ENCODE measurements at regions of chr20 and their contacts with region 1.

Region 1: DNA sequence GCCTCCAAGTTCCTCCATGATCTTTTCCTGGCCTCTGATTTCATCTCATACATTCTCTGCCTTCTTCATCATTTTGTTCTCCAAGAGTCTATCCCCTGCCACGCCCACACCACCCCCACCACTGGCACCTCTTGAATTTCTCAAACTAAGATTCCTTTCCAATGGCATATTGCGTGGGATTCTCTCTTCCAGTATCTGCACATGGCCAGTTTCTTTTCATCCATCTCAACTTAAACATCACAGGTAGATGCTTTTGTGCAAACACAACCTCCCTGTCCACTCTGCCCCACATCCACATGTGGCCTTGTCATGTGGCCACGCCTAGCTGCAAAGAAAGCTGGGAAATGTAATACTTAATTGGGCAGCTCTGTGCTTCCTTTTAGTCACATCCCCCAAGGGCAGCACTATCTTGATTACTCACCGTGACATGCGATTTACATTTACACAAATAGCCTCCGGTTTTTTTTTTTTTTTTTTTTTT is 33.4 kb upstream of the ZMYND8 start:
- DNase-seq: no peak
- H3K4me3 ChIP-seq: no peak overlapping the region
- H3K27ac ChIP-seq: no peak overlapping the region
- H3K4me1 ChIP-seq: no peaks in the 10 kb centered on the region
- H3K27me3 ChIP-seq: no peaks in the 10 kb centered on the region
- CTCF ChIP-seq: no peak
- EP300 ChIP-seq: no peak
- POLR2A ChIP-seq: no peak

Region 2: GRCh38 chr20:47088335-47088734 is 301.6 kb before region 1 on chr20:
- intact Hi-C with region 1: no loop called
- DNase-seq: no peak
- H3K4me3 ChIP-seq: no peak overlapping the region
- H3K27ac ChIP-seq: no peak overlapping the region
- H3K4me1 ChIP-seq: no peaks in the 10 kb centered on the region
- H3K27me3 ChIP-seq: no peaks in the 10 kb centered on the region
- CTCF ChIP-seq: no peak
- EP300 ChIP-seq: no peak
- POLR2A ChIP-seq: no peak

Region 3: GRCh38 chr20:47493175-47493962 is 103.5 kb after region 1 on chr20:
- intact Hi-C with region 1: loop called in 1 of 4 experiments (anchors 10 kb)
- DNase-seq: peak; percentile 93 to 96 (median 95)
- H3K4me3 ChIP-seq: peak overlapping the region; percentile 9
- H3K27ac ChIP-seq: peak overlapping the region in 1 of 2 donors; percentile 36
- H3K4me1 ChIP-seq: peaks cover 5% of the 10 kb centered on the region
- H3K27me3 ChIP-seq: no peaks in the 10 kb centered on the region
- CTCF ChIP-seq: no peak
- EP300 ChIP-seq: no peak
- POLR2A ChIP-seq: no peak

Region 4: DNA sequence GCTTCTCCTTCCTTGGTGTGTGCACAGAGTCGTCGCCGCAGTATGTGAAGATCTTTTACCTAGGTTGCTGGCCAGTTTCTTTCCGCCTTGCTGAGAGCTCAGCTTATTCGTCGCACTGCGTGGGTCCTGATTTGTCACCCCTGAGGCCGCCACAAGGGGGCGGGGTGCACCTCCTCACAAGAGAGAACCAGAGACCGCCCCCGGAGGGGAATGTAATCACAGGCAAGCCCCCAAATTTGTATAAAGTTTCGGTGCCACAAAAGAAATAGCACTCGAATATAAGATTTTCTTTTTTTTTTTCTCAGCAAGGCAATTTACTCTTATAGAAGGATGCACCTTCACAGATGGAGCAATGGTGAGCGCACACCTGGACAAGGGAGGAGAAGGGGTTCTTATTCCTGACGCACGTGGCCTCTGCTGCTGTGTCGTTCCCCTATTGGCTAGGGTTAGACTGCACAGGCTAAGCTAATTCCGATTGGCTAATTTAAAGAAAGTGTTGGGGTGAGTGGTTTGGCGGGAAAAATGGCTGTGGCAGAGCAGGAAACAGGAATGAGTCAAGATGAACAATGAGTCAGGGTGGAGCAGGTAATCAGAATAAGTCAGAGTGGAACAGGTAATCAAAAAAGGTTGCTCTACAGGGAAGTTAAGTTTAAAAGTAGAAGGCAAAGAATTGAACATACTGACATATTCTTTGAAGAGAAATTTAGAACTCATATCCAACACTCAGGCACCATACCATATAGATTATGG is 131.3 kb after region 1 on chr20:
- intact Hi-C with region 1: no loop called
- DNase-seq: no peak
- H3K4me3 ChIP-seq: no peak overlapping the region
- H3K27ac ChIP-seq: no peak overlapping the region
- H3K4me1 ChIP-seq: no peaks in the 10 kb centered on the region
- H3K27me3 ChIP-seq: no peaks in the 10 kb centered on the region
- CTCF ChIP-seq: no peak
- EP300 ChIP-seq: no peak
- POLR2A ChIP-seq: no peak

Region 5: DNA sequence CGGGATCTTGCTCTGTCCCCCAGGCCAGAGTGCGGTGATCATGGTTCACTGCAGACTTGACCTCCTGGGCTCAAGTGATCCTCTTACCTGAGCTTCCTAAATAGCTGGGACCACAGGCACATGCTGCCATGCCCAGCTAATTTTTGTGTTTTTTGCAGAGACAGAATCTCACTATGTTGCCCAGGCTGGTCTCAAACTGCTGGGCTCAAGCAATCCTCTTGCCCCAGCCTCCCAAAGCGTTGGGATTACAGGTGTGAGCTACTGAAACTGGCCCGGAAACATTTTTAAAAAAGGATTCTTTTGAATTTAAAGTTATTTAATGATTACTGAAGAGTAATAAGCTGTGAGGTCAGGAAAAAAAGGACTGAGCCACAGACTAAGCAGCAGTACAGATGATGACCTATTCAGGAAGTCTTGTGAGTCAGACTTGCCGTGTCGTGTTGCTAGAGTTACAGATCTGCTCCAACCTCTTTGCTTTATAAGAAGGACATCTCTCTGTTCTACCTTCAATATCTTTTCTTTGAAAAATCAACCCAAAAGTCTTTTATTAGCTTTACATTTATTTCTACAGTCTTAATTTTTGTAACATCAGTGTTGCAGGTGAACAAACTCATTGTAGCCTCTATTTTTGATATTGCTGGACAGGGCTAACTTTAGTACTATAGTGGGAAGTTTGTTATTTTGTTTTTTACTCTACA is 220.5 kb after region 1 on chr20:
- intact Hi-C with region 1: loop called in 1 of 4 experiments (anchors 10 kb)
- DNase-seq: peak in 1 of 5 donors; percentile 28
- H3K4me3 ChIP-seq: no peak overlapping the region
- H3K27ac ChIP-seq: no peak overlapping the region
- H3K4me1 ChIP-seq: no peaks in the 10 kb centered on the region
- H3K27me3 ChIP-seq: no peaks in the 10 kb centered on the region
- CTCF ChIP-seq: no peak
- EP300 ChIP-seq: no peak
- POLR2A ChIP-seq: no peak

Region 6: GRCh38 chr20:47620808-47621805 is 231.2 kb after region 1 on chr20:
- intact Hi-C with region 1: loop called in 2 of 4 experiments (anchors 2 to 10 kb)
- DNase-seq: no peak
- H3K4me3 ChIP-seq: no peak overlapping the region
- H3K27ac ChIP-seq: no peak overlapping the region
- H3K4me1 ChIP-seq: no peaks in the 10 kb centered on the region
- H3K27me3 ChIP-seq: no peaks in the 10 kb centered on the region
- CTCF ChIP-seq: peak; percentile 65 to 78 (median 66)
- EP300 ChIP-seq: no peak
- POLR2A ChIP-seq: no peak

Measured in ovary (tissue), 10 donors.